ENCODE measurements at regions of chr7 and their contacts with region 1.

Region 1: GRCh38 chr7:100407285-100408180 is 21.0 kb downstream of the ZCWPW1 start:
- DNase-seq: peak in 1 of 2 experiments; percentile 51
- H3K4me3 ChIP-seq: no peak overlapping the region
- H3K27ac ChIP-seq: no peak overlapping the region
- H3K4me1 ChIP-seq: no peaks in the 10 kb centered on the region
- H3K27me3 ChIP-seq: no peaks in the 10 kb centered on the region; a peak in 1 of 7 replicates
- CTCF ChIP-seq: peak in 2 of 3 experiments; percentile 66 to 76; a peak in 3 of 4 replicates
- EP300 ChIP-seq: no peak
- POLR2A ChIP-seq: no peak
- RAD21 ChIP-seq: peak; percentile 74 to 78

Region 2: DNA sequence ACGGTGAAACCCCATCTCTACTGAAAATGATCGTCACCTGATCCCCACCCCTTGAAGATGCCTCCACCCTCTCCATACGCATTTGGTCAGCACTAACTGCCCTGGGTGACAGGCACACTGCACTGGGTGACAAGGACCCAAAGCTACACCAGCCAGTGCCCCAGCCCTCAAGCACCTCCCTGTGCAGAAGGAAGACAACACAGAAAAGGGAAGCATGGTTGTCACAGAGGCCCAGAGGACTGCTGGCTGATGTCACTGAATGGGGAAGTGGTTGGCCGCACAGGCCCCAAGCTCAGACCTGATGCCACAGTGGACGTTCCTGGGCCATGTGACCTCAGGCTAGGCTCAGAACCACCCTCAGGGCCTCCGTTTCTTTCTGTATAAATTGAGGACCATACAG is 38.4 kb before region 1 on chr7:
- CTCF ChIA-PET with region 1: interaction called, 17 read pairs
- POLR2A ChIA-PET with region 1: interaction called, 5 read pairs
- DNase-seq: no peak
- H3K4me3 ChIP-seq: no peak overlapping the region
- H3K27ac ChIP-seq: no peak overlapping the region
- H3K4me1 ChIP-seq: peaks cover 0 to 28% (median 16%) of the 10 kb centered on the region in 4 experiments; a peak in 6 of 7 replicates
- H3K27me3 ChIP-seq: no peaks in the 10 kb centered on the region
- CTCF ChIP-seq: no peak
- EP300 ChIP-seq: no peak
- POLR2A ChIP-seq: peak in 1 of 2 experiments; percentile 47; a peak in 1 of 3 replicates
- RAD21 ChIP-seq: no peak

Region 3: GRCh38 chr7:100390286-100391009 is 17.1 kb before region 1 on chr7:
- CTCF ChIA-PET with region 1: interaction called, 41 read pairs
- POLR2A ChIA-PET with region 1: interaction called, 5 read pairs
- DNase-seq: no peak
- H3K4me3 ChIP-seq: no peak overlapping the region
- H3K27ac ChIP-seq: no peak overlapping the region
- H3K4me1 ChIP-seq: peaks cover 0 to 2% (median 0%) of the 10 kb centered on the region in 4 experiments; a peak in 2 of 7 replicates
- H3K27me3 ChIP-seq: no peaks in the 10 kb centered on the region
- CTCF ChIP-seq: no peak
- EP300 ChIP-seq: no peak
- POLR2A ChIP-seq: no peak
- RAD21 ChIP-seq: no peak

Region 4: GRCh38 chr7:100418930-100419659 is 11.6 kb after region 1 on chr7:
- CTCF ChIA-PET with region 1: interaction called, 17 read pairs
- POLR2A ChIA-PET with region 1: interaction called, 4 read pairs
- DNase-seq: no peak
- H3K4me3 ChIP-seq: no peak overlapping the region
- H3K27ac ChIP-seq: no peak overlapping the region
- H3K4me1 ChIP-seq: no peaks in the 10 kb centered on the region
- H3K27me3 ChIP-seq: no peaks in the 10 kb centered on the region
- CTCF ChIP-seq: no peak
- EP300 ChIP-seq: no peak
- POLR2A ChIP-seq: no peak
- RAD21 ChIP-seq: no peak

Measured in H1 (cell line).